Cardiac septum (tissue), 1 donor: ENCODE measurements at regions of chr2 and their contacts with region 1.

Region 1: DNA sequence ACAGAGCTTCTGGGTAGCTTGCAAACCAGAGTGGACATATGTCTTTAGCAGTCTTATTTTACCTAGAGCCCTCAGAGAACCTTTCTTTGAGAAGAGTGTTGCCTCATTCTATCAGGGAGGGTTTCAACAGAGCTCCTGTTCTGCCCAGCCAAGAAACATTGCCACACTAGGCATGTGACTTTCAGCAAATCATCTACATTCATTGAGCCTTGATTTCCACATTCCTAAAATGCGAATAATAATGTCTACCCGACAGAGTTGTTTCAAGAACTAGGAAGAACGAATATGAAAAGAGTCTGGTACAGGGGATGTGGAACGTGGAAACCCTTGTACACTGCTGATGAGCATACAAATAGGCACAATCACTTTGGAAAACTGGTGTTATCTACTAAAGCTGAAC is 7.8 kb upstream of the PRKAG3 start:
- DNase-seq: no peak

Region 2: GRCh38 chr2:218733171-218734021 is 106.0 kb before region 1 on chr2:
- intact Hi-C with region 1: loop called (anchors 5 kb)
- DNase-seq: peak; percentile 80

Region 3: DNA sequence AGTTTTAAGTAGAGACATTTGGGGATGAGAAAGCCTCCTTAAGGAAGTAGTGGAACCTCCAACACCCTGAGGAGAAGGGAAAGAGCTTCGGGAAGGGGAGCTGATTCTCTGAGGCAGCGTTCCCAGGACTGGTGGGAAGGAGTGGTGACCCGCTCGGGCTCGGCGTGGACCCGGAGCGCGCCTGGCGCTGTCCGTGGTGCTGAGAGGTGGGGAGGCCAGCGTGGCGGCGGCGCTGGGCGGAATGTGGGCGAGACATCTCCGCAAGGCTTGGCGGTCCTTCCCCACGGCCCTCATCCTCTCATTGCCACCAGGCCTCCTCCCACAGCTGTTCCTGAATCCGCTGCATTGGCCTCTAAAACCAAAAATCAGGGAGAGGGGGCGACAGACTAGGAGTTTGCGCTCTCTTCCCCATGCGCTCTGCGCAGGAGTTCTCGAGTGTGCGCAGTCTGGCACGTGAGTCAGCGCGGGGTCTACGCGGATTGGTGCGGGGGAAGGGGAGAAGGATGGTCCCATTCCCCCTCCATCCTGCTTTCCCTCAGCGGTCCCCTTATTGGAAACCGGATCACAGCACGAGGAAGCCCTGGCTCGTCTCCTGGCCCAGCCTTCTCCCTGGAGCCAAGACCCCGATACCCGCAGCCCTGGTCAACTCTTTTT is 492.3 kb after region 1 on chr2:
- intact Hi-C with region 1: no loop called
- DNase-seq: no peak